ENCODE measurements at regions of chr3 and their contacts with region 1.

Region 1: DNA sequence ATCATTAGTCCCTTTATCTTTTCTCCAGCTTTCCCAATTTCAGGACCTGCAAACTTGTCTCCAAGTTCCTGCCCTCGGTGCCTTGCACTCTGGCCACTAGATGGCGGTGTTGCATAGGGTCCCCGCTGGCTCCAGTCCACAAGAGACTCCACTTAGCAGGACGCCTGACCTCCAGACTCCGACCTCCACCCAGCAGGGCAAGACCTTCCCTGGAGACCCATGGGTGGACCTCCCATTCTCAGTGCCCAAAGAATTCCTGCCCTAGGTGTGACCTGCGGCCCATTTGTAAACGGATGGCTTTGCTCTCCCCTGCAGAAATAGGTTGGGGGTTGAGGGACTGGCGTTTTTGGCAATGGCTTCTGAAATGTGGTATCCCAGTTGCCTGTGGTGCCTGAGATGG is 82.6 kb downstream of the LSM3 start:
- DNase-seq: peak; percentile 73

Region 2: DNA sequence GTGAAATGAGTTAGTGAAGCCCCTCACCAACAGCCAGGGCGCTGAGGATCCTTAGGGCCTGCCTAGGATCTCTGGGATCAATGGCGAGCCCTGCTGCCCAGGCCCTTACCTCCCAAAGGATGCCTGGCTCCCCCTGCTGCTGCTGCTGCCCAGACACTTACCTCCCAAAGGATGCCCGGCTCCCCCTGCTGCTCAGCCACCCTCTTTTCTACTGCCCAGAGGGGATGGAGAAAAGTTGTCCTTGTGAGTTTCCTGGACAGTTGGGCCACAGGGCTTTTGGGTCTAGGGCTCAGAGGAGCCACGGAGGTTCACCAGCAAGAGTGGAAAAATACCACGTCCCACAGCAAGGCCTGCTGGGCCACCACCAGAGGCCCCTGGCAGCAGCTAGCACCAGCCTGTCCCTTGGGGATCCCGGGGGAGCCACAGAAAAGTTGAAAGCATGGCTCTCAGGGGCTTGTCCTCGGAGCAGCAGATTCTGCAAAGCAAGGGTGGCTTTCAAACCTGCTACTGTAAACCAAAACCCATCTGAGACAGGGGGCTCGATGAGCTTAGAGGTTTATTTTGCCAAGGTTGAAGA is 200.6 kb after region 1 on chr3:
- in situ Hi-C with region 1: loop called (anchors 10 kb)
- DNase-seq: peak; percentile 61